PC-3 (cell line): ENCODE measurements at regions of chr3 and their contacts with region 1.

Region 1: DNA sequence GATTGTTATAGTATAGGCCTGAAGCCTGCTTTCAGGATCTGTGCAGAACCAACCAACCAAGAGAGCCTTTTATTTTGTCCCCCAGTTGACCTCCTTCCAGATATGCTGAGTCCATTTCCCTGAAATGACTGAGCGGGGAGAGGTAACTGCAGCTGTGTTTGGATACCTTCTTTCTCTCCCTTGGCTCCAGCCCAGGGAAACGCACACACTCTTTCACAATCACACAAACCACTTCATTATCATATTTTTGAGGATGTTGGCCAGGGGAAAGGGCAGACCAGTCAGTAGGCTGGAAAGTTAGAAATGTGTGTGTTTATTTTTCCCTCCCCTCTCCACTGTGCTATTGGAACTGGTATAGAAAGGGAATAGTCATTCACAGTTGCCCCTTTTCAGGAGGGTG is 417.7 kb upstream of the TBL1XR1 start:
- DNase-seq: peak; percentile 97
- ATAC-seq: peak; percentile 64
- H3K4me3 ChIP-seq: no peak overlapping the region
- H3K27ac ChIP-seq: peak overlapping the region; percentile 20; the same call in 1 of the 2 replicates
- H3K4me1 ChIP-seq: peaks cover 49% of the 10 kb centered on the region
- H3K27me3 ChIP-seq: no peaks in the 10 kb centered on the region
- CTCF ChIP-seq: no peak

Region 2: DNA sequence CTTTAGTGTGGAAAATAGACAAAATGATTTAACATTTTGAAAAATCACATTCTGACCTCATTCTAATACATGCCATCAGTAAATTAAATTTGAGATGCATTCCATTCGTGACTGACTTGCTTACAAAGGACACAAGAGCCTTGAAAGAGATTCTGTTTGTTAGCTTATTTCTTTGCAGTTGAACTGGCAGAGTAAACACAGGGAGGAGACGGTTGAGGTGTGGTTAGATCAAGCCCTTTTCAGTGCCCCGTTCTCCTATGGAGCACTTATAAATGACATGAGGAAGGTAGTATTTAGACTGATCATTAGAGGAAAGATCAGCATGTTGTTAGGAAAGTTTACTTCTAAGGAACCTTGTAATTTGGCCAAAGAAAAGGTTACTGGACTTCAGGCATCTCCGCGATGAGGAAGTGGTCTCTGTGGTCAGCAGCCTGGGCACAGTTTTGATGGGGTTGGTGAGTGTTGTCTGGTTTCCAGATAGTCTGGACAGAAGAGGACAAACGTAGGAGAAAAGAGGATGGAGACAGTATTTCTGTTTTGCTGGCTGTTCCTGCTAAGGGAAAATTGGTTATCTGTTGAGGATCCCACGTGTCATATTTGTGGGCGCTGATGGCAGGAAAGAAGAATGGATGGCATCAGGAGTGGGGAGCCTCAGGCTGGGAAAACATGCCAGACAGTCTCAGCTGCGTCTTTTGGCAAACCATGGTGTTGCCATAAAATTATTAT is 88.9 kb before region 1 on chr3:
- CTCF ChIA-PET with region 1: no interaction called
- POLR2A ChIA-PET with region 1: no interaction called
- intact Hi-C with region 1: loop called (anchors 5 kb)
- DNase-seq: peak; percentile 37
- ATAC-seq: peak; percentile 66
- H3K4me3 ChIP-seq: no peak overlapping the region
- H3K27ac ChIP-seq: peak overlapping the region; percentile 35
- H3K4me1 ChIP-seq: peaks cover 33% of the 10 kb centered on the region
- H3K27me3 ChIP-seq: no peaks in the 10 kb centered on the region
- CTCF ChIP-seq: no peak

Region 3: GRCh38 chr3:177777699-177778098 is 162.7 kb after region 1 on chr3:
- CTCF ChIA-PET with region 1: no interaction called
- POLR2A ChIA-PET with region 1: no interaction called
- intact Hi-C with region 1: loop called (anchors 5 kb)
- DNase-seq: peak; percentile 67
- ATAC-seq: peak; percentile 67
- H3K4me3 ChIP-seq: no peak overlapping the region
- H3K27ac ChIP-seq: no peak overlapping the region
- H3K4me1 ChIP-seq: peaks cover 20% of the 10 kb centered on the region
- H3K27me3 ChIP-seq: no peaks in the 10 kb centered on the region
- CTCF ChIP-seq: peak; percentile 73

Region 4: DNA sequence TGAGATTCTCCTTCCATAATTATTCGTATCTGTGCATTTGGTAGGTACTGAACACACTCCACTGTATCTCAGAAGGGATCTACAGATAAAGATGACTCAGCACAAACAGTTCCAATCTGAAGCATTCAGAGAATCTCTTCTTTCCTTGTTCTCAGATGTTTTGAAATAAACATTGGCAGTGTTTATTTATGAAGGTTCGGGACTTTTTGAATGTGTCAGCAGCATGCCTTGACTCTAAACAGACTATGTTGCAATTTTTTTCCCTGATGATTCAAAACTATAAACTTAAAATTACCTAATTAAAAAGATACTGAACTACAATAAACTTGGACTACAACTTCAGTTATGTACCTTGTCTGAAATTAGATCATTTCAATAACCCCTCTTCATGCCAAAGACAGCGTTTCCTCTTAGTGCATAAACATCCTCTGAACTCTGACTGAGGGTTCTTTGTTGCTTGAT is 195.2 kb after region 1 on chr3:
- CTCF ChIA-PET with region 1: no interaction called
- POLR2A ChIA-PET with region 1: no interaction called
- intact Hi-C with region 1: loop called (anchors 1 kb)
- DNase-seq: peak; percentile 95
- ATAC-seq: peak; percentile 93
- H3K4me3 ChIP-seq: no peak overlapping the region
- H3K27ac ChIP-seq: peak overlapping the region; percentile 53
- H3K4me1 ChIP-seq: peaks cover 30% of the 10 kb centered on the region
- H3K27me3 ChIP-seq: no peaks in the 10 kb centered on the region
- CTCF ChIP-seq: no peak